Activated CD4-positive, alpha-beta T cell treated with anti-CD3 and anti-CD28 coated beads, Interleukin-2, amount 10 ng/mL, durations not matched to agents 24 days and 14 days (primary cell): ENCODE measurements at regions of chr1 and their contacts with region 1.

Region 1: GRCh38 chr1:78839704-78840277 is 166.7 kb downstream of the ADGRL4 start:
- DNase-seq: peak; percentile 80
- H3K4me3 Mint-ChIP-seq: no peak overlapping the region
- H3K27ac Mint-ChIP-seq: no peak overlapping the region
- H3K4me1 Mint-ChIP-seq: peaks cover 7% of the 10 kb centered on the region
- H3K27me3 Mint-ChIP-seq: peaks cover 2% of the 10 kb centered on the region

Region 2: DNA sequence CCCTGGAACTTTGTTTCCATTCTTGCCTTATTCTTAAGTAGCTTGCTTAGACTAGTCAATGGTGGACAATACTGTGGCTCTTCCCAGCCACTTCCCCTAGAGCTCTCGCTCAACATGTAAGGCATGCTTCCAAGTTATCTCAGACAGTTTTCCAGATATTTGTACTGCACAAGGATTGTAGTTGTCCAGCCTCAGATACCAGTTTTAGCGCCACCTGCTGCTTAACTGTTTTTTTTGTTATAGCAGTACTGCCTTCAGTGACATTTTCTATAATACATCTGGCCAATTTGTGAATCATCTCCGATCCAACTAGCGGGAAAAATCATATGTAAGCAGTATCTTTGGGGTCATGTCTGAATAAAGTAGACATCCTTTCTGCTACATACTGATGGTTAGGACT is 513.4 kb after region 1 on chr1:
- intact Hi-C with region 1: loop called (anchors 2 kb)
- DNase-seq: peak; percentile 56
- H3K4me3 Mint-ChIP-seq: no peak overlapping the region
- H3K27ac Mint-ChIP-seq: no peak overlapping the region
- H3K4me1 Mint-ChIP-seq: no peaks in the 10 kb centered on the region
- H3K27me3 Mint-ChIP-seq: no peaks in the 10 kb centered on the region